ENCODE measurements at regions of chr1 and their contacts with region 1.

Region 1: DNA sequence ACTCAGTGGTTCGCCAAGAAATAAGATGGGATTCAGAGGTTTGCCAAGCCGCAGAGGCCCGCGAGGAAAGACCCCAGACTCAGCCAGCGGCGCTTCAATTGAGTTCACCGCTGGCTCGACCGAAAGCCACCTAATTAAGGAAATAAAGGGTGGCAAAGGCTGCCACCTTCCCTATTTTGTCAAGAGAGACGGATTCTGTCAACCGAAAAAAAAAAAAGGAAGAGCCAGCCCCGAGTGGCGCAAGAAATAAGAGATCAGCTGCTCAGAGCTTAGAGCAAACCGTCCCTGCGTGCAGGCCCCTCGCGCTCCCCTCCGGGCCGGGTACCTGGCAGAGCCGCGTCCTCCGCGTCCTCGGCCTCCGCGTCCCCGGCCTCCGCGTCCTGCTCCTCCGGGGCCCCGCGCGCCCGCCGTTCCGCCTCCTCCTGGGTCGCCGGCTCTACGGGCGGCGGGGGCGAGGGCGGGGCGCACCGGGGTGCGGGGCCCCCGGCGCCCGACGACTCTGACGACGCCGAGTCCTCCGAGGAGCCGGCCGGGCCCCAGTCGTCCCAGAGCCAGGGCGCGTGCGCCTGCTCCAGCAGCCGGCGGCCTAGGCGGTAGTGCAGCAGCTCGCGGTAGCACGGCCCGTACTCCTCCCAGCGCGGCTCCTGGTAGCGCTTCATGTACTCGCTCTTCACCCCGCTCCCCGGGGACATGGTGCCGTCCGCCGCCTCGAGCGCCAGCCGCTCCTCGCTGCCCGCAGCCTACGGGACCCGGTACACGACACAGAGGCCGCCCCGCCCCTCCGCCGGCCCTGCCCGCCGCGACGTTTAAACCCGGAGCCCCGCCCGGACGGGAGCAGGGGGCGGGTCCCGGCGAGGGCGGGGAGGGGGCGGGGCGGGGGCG is 832 bp downstream of the CCSAP start:
- DNase-seq: peak; percentile 78 to 87 (median 84)
- ATAC-seq: peak; percentile 92
- H3K4me3 ChIP-seq: peak overlapping the region; percentile 87
- H3K4me3 Mint-ChIP-seq: peak overlapping the region; percentile 88 to 96 (median 93)
- H3K27ac ChIP-seq: peak overlapping the region; percentile 88
- H3K27ac Mint-ChIP-seq: peak overlapping the region; percentile 72 to 93 (median 89)
- H3K4me1 ChIP-seq: peaks cover 5 to 7% of the 10 kb centered on the region in 2 donors
- H3K4me1 Mint-ChIP-seq: peaks cover 32 to 59% (median 49%) of the 10 kb centered on the region in 7 donors
- H3K27me3 ChIP-seq: no peaks in the 10 kb centered on the region
- H3K27me3 Mint-ChIP-seq: peaks cover 0 to 23% (median 7%) of the 10 kb centered on the region in 5 donors

Region 2: DNA sequence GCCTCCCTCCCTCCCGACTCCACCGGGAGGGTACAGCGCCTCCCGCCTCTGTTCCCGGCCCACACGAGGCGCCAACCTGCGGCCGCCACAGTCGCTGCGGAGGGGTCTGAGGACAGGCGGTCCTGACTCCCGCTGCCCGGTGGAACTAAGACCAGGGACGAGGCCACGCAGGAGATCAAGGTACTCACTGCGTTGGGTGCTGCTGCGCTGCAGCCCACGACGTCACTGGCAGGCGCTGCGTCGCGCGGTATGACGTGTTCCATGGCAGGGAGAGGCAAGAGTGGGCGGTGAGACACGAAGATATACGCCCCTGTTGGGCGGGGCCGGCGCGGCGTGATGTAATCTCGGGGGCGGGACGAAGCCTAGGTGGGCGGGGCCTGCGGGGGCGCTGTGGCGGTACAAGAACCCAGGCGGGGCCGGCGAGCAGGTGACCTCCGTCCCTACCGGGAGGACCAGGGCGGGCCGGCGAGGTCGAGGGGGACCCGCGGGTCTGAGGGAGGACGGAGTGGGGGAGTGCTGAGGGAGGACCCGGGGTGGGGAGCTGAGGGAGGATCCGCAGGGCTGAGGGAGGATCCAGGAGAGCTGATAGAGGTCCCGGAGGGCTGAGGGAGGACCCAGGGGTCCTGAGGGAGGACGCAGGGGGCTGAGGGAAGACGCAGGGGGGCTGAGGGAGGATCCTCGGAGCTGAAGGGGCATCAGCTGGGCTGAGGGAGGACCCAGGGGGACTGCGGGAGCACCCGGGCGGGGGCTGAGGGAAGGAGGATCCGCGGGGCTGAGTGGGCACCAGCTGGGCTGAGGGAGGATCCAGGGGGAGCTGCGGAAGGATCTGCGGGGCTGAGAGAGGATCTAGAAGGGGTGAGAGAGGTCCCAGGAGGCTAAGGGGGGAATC is 1232.7 kb before region 1 on chr1 and contains the start of gene MRPL55:
- CTCF ChIA-PET with region 1: no interaction called
- POLR2A ChIA-PET with region 1: no interaction called
- intact Hi-C with region 1: loop called in 1 of 2 experiments (anchors 5 kb)
- DNase-seq: peak; percentile 97 to 100 (median 99)
- ATAC-seq: peak; percentile 99
- H3K4me3 ChIP-seq: peak within 1 kb of the TSS; percentile 100
- H3K4me3 Mint-ChIP-seq: peak within 1 kb of the TSS; percentile 87 to 95 (median 93)
- H3K27ac ChIP-seq: peak within 1 kb of the TSS; percentile 94
- H3K27ac Mint-ChIP-seq: peak within 1 kb of the TSS; percentile 88 to 98 (median 95)
- H3K4me1 ChIP-seq: peaks cover 9 to 16% of the 10 kb centered on the region in 2 donors
- H3K4me1 Mint-ChIP-seq: peaks cover 5 to 37% (median 26%) of the 10 kb centered on the region in 7 donors
- H3K27me3 ChIP-seq: no peaks in the 10 kb centered on the region
- H3K27me3 Mint-ChIP-seq: peaks cover 0 to 3% (median 0%) of the 10 kb centered on the region in 5 donors
- total RNA-seq, gene MRPL55: 34.3 to 79.3 (median 65.2) TPM

Region 3: GRCh38 chr1:228464487-228464983 is 877.5 kb before region 1 on chr1:
- CTCF ChIA-PET with region 1: no interaction called
- POLR2A ChIA-PET with region 1: no interaction called
- intact Hi-C with region 1: loop called (anchors 5 kb)
- DNase-seq: peak; percentile 56 to 93 (median 85)
- ATAC-seq: peak; percentile 98
- H3K4me3 ChIP-seq: peak overlapping the region; percentile 62
- H3K4me3 Mint-ChIP-seq: peak overlapping the region; percentile 73 to 93 (median 82)
- H3K27ac ChIP-seq: peak overlapping the region; percentile 50
- H3K27ac Mint-ChIP-seq: peak overlapping the region; percentile 13 to 92 (median 62)
- H3K4me1 ChIP-seq: peaks cover 17 to 18% of the 10 kb centered on the region in 2 donors
- H3K4me1 Mint-ChIP-seq: peaks cover 24 to 66% (median 40%) of the 10 kb centered on the region in 7 donors
- H3K27me3 ChIP-seq: no peaks in the 10 kb centered on the region
- H3K27me3 Mint-ChIP-seq: peaks cover 11 to 34% (median 24%) of the 10 kb centered on the region in 5 donors

Region 4: GRCh38 chr1:229325853-229326502 is 16.0 kb before region 1 on chr1:
- CTCF ChIA-PET with region 1: interaction called, 4 read pairs
- POLR2A ChIA-PET with region 1: interaction called, 16 read pairs
- intact Hi-C with region 1: loop called (anchors 1 kb)
- DNase-seq: peak in 4 of 9 donors; percentile 7 to 30 (median 10)
- ATAC-seq: no peak
- H3K4me3 ChIP-seq: no peak overlapping the region
- H3K4me3 Mint-ChIP-seq: peak overlapping the region in 8 of 10 donors; percentile 51 to 81 (median 75)
- H3K27ac ChIP-seq: peak overlapping the region; percentile 29
- H3K27ac Mint-ChIP-seq: peak overlapping the region in 8 of 9 donors; percentile 64 to 96 (median 92)
- H3K4me1 ChIP-seq: no peaks in the 10 kb centered on the region
- H3K4me1 Mint-ChIP-seq: peaks cover 0 to 38% (median 16%) of the 10 kb centered on the region in 7 donors
- H3K27me3 ChIP-seq: no peaks in the 10 kb centered on the region
- H3K27me3 Mint-ChIP-seq: no peaks in the 10 kb centered on the region

Region 5: GRCh38 chr1:229431284-229432115 is 89.5 kb after region 1 on chr1:
- CTCF ChIA-PET with region 1: no interaction called
- POLR2A ChIA-PET with region 1: no interaction called
- intact Hi-C with region 1: loop called in 1 of 2 experiments (anchors 2 kb)
- DNase-seq: peak in 2 of 9 donors; percentile 18 to 20
- ATAC-seq: no peak
- H3K4me3 ChIP-seq: peak overlapping the region; percentile 45
- H3K4me3 Mint-ChIP-seq: peak overlapping the region; percentile 66 to 95 (median 84)
- H3K27ac ChIP-seq: no peak overlapping the region
- H3K27ac Mint-ChIP-seq: peak overlapping the region in 3 of 9 donors; percentile 6 to 56 (median 13)
- H3K4me1 ChIP-seq: peaks cover 8 to 16% of the 10 kb centered on the region in 2 donors
- H3K4me1 Mint-ChIP-seq: peaks cover 6 to 29% (median 26%) of the 10 kb centered on the region in 7 donors
- H3K27me3 ChIP-seq: peaks cover 4 to 23% of the 10 kb centered on the region in 2 donors
- H3K27me3 Mint-ChIP-seq: peaks cover 49 to 87% (median 59%) of the 10 kb centered on the region in 5 donors

Region 6: DNA sequence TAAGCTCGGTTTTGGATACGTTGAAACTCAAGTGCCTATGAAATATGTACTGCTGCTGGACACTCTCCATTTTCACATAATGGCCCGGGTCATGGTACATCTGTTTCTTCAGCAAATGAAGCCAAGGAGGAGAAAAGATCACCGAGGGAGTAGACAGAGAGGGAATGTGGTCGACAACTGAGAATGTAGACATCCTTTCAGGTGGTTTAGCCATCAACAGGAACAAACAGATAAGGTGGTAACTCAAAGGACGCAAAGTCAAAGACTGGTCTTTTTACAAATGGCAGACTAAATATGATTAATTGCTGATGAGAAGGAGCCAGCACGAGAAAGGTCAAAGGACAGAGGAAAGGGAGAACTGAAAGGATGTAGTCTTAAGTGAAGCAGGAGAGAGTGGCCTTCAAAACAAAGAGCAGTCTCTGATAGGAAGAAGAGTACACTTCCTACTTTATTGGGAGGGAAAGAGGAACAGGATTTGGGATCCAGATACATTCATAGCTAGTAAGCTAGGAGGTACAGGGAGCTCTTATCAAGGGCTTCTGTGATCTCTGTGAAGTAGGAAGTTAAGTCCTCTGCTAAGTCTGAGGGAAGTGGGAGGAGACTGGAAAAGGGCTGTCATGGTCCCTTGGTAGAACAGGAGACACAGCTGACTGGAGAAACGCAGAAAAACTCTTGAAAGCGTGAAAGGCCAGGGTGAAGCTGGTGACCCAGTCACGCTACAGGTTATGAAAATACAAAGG is 137.8 kb after region 1 on chr1:
- CTCF ChIA-PET with region 1: no interaction called
- POLR2A ChIA-PET with region 1: no interaction called
- intact Hi-C with region 1: no loop called
- DNase-seq: no peak
- ATAC-seq: no peak
- H3K4me3 ChIP-seq: no peak overlapping the region
- H3K4me3 Mint-ChIP-seq: no peak overlapping the region
- H3K27ac ChIP-seq: no peak overlapping the region
- H3K27ac Mint-ChIP-seq: peak overlapping the region in 2 of 9 donors; percentile 36 to 43
- H3K4me1 ChIP-seq: no peaks in the 10 kb centered on the region
- H3K4me1 Mint-ChIP-seq: peaks cover 4 to 19% (median 9%) of the 10 kb centered on the region in 7 donors
- H3K27me3 ChIP-seq: no peaks in the 10 kb centered on the region
- H3K27me3 Mint-ChIP-seq: no peaks in the 10 kb centered on the region

Region 7: DNA sequence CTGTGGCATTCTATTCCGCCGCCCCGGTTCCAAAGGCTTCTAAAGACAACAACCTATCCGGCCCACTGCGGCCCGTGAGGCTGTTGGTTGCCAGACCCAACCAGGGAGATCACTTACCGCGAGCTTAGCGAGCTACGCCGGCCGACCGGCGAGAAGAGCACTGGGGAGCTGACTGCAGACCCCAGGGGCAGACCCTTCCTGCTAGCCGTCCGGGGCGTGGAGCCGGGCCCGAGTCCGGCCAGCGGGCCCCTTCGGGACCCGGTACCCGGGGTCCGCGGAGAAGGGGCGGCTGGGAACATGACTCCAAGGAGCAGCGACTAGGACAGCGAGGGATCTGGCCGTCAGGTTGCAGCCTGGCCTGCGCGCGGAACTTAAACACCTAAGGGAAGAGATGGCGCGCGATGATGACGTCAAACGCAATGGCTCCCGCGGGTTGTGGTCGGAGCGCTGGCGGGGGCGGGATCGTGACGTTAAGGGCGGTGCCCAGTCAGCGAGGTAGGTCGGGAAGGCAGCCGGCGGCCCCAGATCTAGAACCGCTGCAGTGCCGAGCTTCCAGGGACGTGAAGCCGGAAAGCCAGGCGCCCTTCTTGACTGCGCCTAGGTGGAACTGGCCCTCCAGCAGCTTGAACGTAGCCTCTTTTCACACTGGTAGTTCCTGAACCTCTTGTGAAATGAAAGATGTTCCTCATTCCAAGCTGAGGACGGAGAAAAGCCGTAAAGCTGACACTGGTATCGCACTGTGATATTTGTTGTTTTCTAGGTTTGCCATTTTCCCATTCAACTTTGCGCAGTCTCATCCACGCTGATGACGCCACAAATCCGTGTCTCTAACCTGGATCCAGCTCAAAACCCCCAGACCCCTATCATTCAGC is 166.2 kb after region 1 on chr1 and contains the start of gene NUP133:
- CTCF ChIA-PET with region 1: no interaction called
- POLR2A ChIA-PET with region 1: interaction called, 15 read pairs
- intact Hi-C with region 1: loop called (anchors 1 kb)
- DNase-seq: peak; percentile 93 to 97 (median 97)
- ATAC-seq: peak; percentile 98
- H3K4me3 ChIP-seq: peak within 1 kb of the TSS; percentile 91
- H3K4me3 Mint-ChIP-seq: peak within 1 kb of the TSS; percentile 90 to 98 (median 92)
- H3K27ac ChIP-seq: peak within 1 kb of the TSS; percentile 95
- H3K27ac Mint-ChIP-seq: peak within 1 kb of the TSS; percentile 95 to 99 (median 99)
- H3K4me1 ChIP-seq: peaks cover 4 to 13% of the 10 kb centered on the region in 2 donors
- H3K4me1 Mint-ChIP-seq: peaks cover 10 to 47% (median 38%) of the 10 kb centered on the region in 7 donors
- H3K27me3 ChIP-seq: no peaks in the 10 kb centered on the region
- H3K27me3 Mint-ChIP-seq: peaks cover 0 to 5% (median 2%) of the 10 kb centered on the region in 5 donors
- total RNA-seq, gene NUP133: 24.3 to 45.8 (median 40.4) TPM

Region 8: GRCh38 chr1:229625915-229626831 is 284.2 kb after region 1 on chr1 and contains the starts of genes TAF5L and URB2:
- CTCF ChIA-PET with region 1: no interaction called
- POLR2A ChIA-PET with region 1: no interaction called
- intact Hi-C with region 1: loop called (anchors 2 to 5 kb)
- DNase-seq: peak; percentile 81 to 91 (median 85)
- ATAC-seq: peak; percentile 97
- H3K4me3 ChIP-seq: peak within 1 kb of the TSS; percentile 93
- H3K4me3 Mint-ChIP-seq: peak within 1 kb of the TSS; percentile 94 to 100 (median 98)
- H3K27ac ChIP-seq: peak within 1 kb of the TSS; percentile 80
- H3K27ac Mint-ChIP-seq: peak within 1 kb of the TSS; percentile 93 to 98 (median 97)
- H3K4me1 ChIP-seq: peaks cover 21 to 27% of the 10 kb centered on the region in 2 donors
- H3K4me1 Mint-ChIP-seq: peaks cover 39 to 69% (median 59%) of the 10 kb centered on the region in 7 donors
- H3K27me3 ChIP-seq: no peaks in the 10 kb centered on the region
- H3K27me3 Mint-ChIP-seq: no peaks in the 10 kb centered on the region
- total RNA-seq, gene TAF5L: 17.3 to 27.2 (median 19.8) TPM
- total RNA-seq, gene URB2: 6.2 to 18.2 (median 11.0) TPM

Region 9: DNA sequence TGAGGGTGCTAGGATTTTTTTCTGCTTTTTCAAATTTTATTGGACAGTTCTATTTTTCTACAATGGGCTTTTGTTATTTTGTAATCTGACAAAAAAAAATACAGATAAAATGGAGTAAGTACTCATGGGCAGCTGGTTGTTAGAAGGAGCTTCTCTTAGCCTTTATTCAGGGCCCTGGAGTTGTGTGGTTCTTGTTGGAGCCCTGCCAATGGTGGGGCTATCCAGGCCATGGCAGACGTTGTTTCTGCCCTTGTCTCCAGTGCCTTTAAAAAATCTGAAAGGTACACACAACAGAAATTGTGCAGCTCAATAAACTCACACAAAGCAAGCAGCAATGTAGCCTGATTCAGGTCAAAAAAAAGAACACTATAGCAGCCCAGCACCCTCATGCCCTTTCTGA is 571.5 kb after region 1 on chr1:
- CTCF ChIA-PET with region 1: no interaction called
- POLR2A ChIA-PET with region 1: no interaction called
- intact Hi-C with region 1: no loop called
- DNase-seq: no peak
- ATAC-seq: no peak
- H3K4me3 ChIP-seq: no peak overlapping the region
- H3K4me3 Mint-ChIP-seq: no peak overlapping the region
- H3K27ac ChIP-seq: no peak overlapping the region
- H3K27ac Mint-ChIP-seq: no peak overlapping the region
- H3K4me1 ChIP-seq: no peaks in the 10 kb centered on the region
- H3K4me1 Mint-ChIP-seq: peaks cover 0 to 1% (median 0%) of the 10 kb centered on the region in 7 donors
- H3K27me3 ChIP-seq: no peaks in the 10 kb centered on the region
- H3K27me3 Mint-ChIP-seq: peaks cover 0 to 37% (median 20%) of the 10 kb centered on the region in 5 donors